Calu3 (cell line): ENCODE measurements at regions of chr18 and their contacts with region 1.

Region 1: GRCh38 chr18:68847219-68847837 is 49.4 kb downstream of the CCDC102B start:
- DNase-seq: no peak
- H3K4me3 Mint-ChIP-seq: no peak overlapping the region
- H3K27ac Mint-ChIP-seq: no peak overlapping the region
- H3K4me1 Mint-ChIP-seq: no peaks in the 10 kb centered on the region
- H3K27me3 Mint-ChIP-seq: no peaks in the 10 kb centered on the region
- CTCF ChIP-seq: peak; percentile 59

Region 2: DNA sequence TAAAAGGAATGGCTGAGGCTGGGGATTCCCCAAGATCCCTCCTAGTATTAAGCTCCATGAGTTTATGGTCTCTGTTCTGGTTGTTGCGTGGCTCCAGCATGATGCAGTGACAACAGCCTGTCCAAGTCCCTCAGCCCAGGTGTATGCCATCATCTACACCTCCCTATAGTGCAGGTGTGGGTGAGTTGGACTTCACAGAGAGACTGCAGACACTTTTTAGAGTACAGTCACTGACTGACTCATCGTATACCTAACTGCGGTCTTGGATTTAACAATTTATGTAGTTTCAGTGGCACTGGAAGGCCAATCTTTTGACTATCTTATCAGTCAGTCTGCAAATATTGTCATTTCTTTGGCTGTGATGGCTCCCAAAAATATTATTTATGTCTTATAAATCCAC is 547.4 kb before region 1 on chr18:
- CTCF ChIA-PET with region 1: no interaction called
- intact Hi-C with region 1: no loop called
- DNase-seq: no peak
- H3K4me3 Mint-ChIP-seq: no peak overlapping the region
- H3K27ac Mint-ChIP-seq: no peak overlapping the region
- H3K4me1 Mint-ChIP-seq: no peaks in the 10 kb centered on the region
- H3K27me3 Mint-ChIP-seq: no peaks in the 10 kb centered on the region
- CTCF ChIP-seq: no peak

Region 3: DNA sequence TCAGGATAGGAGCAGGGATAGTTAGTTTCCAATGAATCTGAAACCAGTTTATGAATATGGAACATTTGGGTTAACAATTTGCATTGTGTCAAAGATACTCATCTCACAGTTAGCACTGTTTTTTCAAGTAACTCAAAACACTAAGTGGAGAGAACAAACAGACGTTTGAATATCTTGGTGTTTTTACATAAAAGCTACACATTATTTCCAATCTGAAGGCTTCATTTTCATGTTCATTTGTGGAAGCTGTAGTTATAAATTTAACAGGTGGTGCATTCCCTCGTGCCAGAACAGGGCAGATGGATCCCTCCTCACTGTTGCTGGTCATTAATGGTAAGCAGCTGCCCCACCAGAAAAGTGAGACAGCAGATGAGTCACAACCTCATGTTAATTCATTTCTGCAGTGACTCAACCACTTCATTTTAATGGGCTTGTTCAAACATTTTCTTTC is 419.4 kb before region 1 on chr18:
- CTCF ChIA-PET with region 1: no interaction called
- intact Hi-C with region 1: no loop called
- DNase-seq: peak; percentile 10
- H3K4me3 Mint-ChIP-seq: no peak overlapping the region
- H3K27ac Mint-ChIP-seq: no peak overlapping the region
- H3K4me1 Mint-ChIP-seq: peaks cover 27% of the 10 kb centered on the region
- H3K27me3 Mint-ChIP-seq: no peaks in the 10 kb centered on the region
- CTCF ChIP-seq: no peak

Region 4: GRCh38 chr18:68494802-68495581 is 352.3 kb before region 1 on chr18:
- CTCF ChIA-PET with region 1: no interaction called
- intact Hi-C with region 1: no loop called
- DNase-seq: no peak
- H3K4me3 Mint-ChIP-seq: no peak overlapping the region
- H3K27ac Mint-ChIP-seq: no peak overlapping the region
- H3K4me1 Mint-ChIP-seq: no peaks in the 10 kb centered on the region
- H3K27me3 Mint-ChIP-seq: no peaks in the 10 kb centered on the region
- CTCF ChIP-seq: no peak

Region 5: GRCh38 chr18:69484699-69485396 is 637.5 kb after region 1 on chr18:
- CTCF ChIA-PET with region 1: no interaction called
- intact Hi-C with region 1: loop called (anchors 2 kb)
- DNase-seq: no peak
- H3K4me3 Mint-ChIP-seq: no peak overlapping the region
- H3K27ac Mint-ChIP-seq: peak overlapping the region; percentile 40
- H3K4me1 Mint-ChIP-seq: peaks cover 10% of the 10 kb centered on the region
- H3K27me3 Mint-ChIP-seq: no peaks in the 10 kb centered on the region
- CTCF ChIP-seq: no peak

Region 6: DNA sequence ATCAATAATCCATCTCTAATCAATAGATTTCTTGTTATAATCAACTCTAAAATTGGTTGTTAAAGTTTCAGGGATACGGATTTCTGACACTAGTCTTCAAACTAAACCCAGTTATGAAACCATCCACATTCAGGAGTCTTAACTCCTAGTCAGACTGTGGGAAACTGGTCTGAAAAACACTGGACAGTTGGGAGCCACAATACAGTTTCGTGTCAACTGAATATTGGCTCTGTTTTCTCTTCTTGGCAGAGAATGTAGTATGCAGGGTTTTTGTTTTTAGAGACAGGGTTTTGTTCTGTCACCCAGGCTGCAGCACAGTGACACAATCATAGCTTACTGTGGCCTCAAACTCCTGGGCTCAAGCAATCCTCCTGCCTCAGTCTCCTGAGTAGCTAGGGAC is 1235.1 kb after region 1 on chr18:
- CTCF ChIA-PET with region 1: no interaction called
- intact Hi-C with region 1: loop called (anchors 1 kb)
- DNase-seq: no peak
- H3K4me3 Mint-ChIP-seq: no peak overlapping the region
- H3K27ac Mint-ChIP-seq: no peak overlapping the region
- H3K4me1 Mint-ChIP-seq: no peaks in the 10 kb centered on the region
- H3K27me3 Mint-ChIP-seq: no peaks in the 10 kb centered on the region
- CTCF ChIP-seq: no peak